PC-3 (cell line): ENCODE measurements at regions of chr3 and their contacts with region 1.

Region 1: GRCh38 chr3:45224824-45225464 is 1.1 kb downstream of the TMEM158 start:
- DNase-seq: peak; percentile 73
- ATAC-seq: peak; percentile 61
- H3K4me3 ChIP-seq: peak overlapping the region; percentile 76
- H3K27ac ChIP-seq: peak overlapping the region; percentile 64
- H3K4me1 ChIP-seq: peaks cover 15% of the 10 kb centered on the region
- H3K27me3 ChIP-seq: no peaks in the 10 kb centered on the region
- CTCF ChIP-seq: peak; percentile 58

Region 2: GRCh38 chr3:45398178-45398577 is 173.2 kb after region 1 on chr3:
- CTCF ChIA-PET with region 1: no interaction called
- POLR2A ChIA-PET with region 1: interaction called, 7 read pairs
- intact Hi-C with region 1: loop called (anchors 2 kb)
- DNase-seq: peak; percentile 82
- ATAC-seq: peak; percentile 96
- H3K4me3 ChIP-seq: peak overlapping the region; percentile 16; the same call in 1 of the 2 replicates
- H3K27ac ChIP-seq: peak overlapping the region; percentile 70
- H3K4me1 ChIP-seq: peaks cover 16% of the 10 kb centered on the region
- H3K27me3 ChIP-seq: no peaks in the 10 kb centered on the region
- CTCF ChIP-seq: no peak

Region 3: DNA sequence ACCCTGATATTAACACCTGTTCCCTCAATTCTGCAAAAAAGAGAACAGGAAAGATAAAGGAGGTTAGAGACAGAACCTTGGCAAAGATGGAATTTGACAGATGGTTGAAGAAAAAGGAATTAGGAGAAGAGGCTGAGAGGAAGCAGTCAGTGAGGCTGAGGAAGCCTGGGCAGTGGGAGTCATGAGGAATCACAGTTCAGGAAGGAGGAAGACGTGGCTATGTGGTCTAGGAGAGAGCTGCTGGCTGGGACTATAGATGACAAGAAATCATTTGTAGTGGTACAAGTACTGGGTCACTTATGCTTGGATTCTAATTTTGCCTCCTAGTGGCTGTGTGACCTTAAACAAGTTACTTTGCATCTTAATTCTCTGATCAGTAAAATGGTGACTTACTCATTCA is 212.4 kb after region 1 on chr3:
- CTCF ChIA-PET with region 1: no interaction called
- POLR2A ChIA-PET with region 1: no interaction called
- intact Hi-C with region 1: loop called (anchors 1 kb)
- DNase-seq: peak; percentile 9
- ATAC-seq: peak; percentile 71
- H3K4me3 ChIP-seq: no peak overlapping the region
- H3K27ac ChIP-seq: no peak overlapping the region
- H3K4me1 ChIP-seq: no peaks in the 10 kb centered on the region
- H3K27me3 ChIP-seq: no peaks in the 10 kb centered on the region
- CTCF ChIP-seq: peak; percentile 47; the same call in 1 of the 2 replicates